ENCODE measurements at regions of chr1 and their contacts with region 1.

Region 1: GRCh38 chr1:37177247-37177864 is 143.0 kb upstream of the GRIK3 start:
- DNase-seq: peak in 1 of 2 experiments; percentile 40
- H3K4me3 ChIP-seq: no peak overlapping the region
- H3K27ac ChIP-seq: no peak overlapping the region
- H3K4me1 ChIP-seq: no peaks in the 10 kb centered on the region
- H3K27me3 ChIP-seq: peaks cover 14% of the 10 kb centered on the region
- CTCF ChIP-seq: peak; percentile 53; the same call in 1 of the 2 replicates

Region 2: DNA sequence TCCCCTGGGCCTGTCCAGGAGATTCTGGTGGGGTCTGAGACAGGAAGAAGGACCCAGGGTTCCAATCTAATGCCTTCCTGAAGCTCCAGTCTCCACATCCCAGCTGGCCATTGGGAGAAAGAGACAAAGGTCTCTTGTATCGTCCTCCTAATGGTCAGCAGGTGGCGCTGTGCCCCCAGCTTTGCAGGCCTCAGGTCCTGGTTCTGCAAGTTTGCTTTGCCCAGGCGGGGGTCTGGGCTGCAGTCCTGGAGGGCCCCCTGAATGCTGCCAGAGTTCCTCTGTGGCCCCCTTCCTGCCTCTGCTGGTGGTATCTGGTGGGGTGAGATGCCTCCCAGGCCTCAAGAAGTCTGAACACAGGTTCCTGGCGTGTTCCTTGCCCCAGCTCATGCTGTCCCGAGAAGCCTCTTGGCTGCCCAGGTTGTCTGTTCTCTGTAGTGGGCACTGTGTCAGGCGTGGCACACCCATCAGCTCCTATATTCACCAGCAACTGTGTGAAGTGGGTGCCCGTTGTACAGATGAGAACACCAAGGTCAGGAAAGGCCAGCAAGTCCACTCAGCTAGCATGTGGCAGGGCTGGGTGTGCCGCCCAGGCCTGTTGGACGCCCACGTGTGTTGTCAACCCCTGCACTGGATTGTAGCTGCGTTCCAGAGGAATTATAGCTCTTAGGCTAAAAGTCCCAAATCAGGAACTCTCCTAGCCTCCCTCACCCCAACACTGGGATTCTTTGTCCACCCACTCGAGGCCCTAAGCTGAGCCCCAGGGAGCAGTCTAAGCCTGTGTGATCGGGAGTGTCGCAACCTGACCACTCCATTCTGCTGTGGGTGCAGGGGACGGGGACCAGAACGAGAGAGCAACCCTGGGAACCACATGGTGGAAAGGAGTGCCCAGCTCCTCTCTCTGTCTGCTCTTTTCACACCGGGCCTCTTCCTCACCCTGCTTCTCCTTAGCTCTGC is 660.7 kb before region 1 on chr1:
- CTCF ChIA-PET with region 1: no interaction called
- POLR2A ChIA-PET with region 1: no interaction called
- intact Hi-C with region 1: loop called (anchors 5 kb)
- DNase-seq: peak in 1 of 2 experiments; percentile 44
- H3K4me3 ChIP-seq: no peak overlapping the region
- H3K27ac ChIP-seq: no peak overlapping the region
- H3K4me1 ChIP-seq: no peaks in the 10 kb centered on the region
- H3K27me3 ChIP-seq: no peaks in the 10 kb centered on the region
- CTCF ChIP-seq: peak; percentile 96

Region 3: GRCh38 chr1:37574834-37575480 is 397.6 kb after region 1 on chr1:
- CTCF ChIA-PET with region 1: no interaction called
- POLR2A ChIA-PET with region 1: no interaction called
- intact Hi-C with region 1: no loop called
- DNase-seq: no peak
- H3K4me3 ChIP-seq: no peak overlapping the region
- H3K27ac ChIP-seq: no peak overlapping the region
- H3K4me1 ChIP-seq: peaks cover 11% of the 10 kb centered on the region; the same call in 1 of the 2 replicates
- H3K27me3 ChIP-seq: no peaks in the 10 kb centered on the region
- CTCF ChIP-seq: no peak

Region 4: GRCh38 chr1:37999430-38000232 is 822.3 kb after region 1 on chr1:
- CTCF ChIA-PET with region 1: no interaction called
- POLR2A ChIA-PET with region 1: interaction called, 11 read pairs
- intact Hi-C with region 1: no loop called
- DNase-seq: peak in 1 of 2 experiments; percentile 62
- H3K4me3 ChIP-seq: no peak overlapping the region
- H3K27ac ChIP-seq: peak overlapping the region; percentile 66
- H3K4me1 ChIP-seq: peaks cover 43% of the 10 kb centered on the region
- H3K27me3 ChIP-seq: no peaks in the 10 kb centered on the region
- CTCF ChIP-seq: no peak

Measured in PC-9 (cell line).